ENCODE measurements at regions of chr4 and their contacts with region 1.

Region 1: DNA sequence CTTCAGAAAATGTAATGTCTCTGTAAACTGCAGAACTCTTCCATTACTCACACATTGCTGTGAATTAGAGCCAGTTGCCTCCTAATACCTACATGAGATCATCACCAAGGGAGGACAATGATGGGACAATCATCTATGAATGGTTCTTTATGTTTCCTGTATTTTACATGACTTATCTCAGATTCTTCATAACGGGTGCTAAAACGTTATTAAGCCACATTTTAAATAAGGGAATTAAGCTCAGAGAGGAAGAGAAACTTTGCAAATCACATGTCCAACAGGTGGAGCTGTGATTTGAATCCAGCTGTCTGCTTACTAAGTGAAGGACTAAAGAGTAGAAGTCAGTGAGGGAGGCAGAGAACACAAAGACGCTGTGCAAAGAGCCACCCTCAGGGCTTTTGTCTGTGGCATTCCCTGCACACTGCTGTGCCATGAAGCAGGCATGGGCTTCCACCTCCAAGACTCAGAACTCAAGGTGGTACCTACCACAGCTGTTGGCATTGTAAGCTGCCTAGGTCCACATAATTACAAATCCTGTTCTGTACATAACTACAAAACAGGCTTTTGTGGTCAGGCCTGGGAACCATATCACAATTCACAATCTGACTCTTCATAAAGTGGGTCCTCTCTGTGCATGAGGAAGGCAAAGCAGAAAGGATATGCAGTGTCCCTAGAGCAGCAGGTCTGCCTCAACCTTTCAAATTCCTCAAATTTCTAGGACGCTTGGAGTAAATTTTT is 12.8 kb downstream of the TBC1D9 start:
- DNase-seq: peak; percentile 83
- ATAC-seq: peak; percentile 72
- H3K4me3 ChIP-seq: peak overlapping the region; percentile 7 to 59 (median 31)
- H3K4me3 Mint-ChIP-seq: peak overlapping the region; percentile 82
- H3K27ac ChIP-seq: peak overlapping the region; percentile 89 to 91
- H3K27ac Mint-ChIP-seq: peak overlapping the region; percentile 94
- H3K4me1 ChIP-seq: peaks cover 71 to 76% of the 10 kb centered on the region in 2 donors
- H3K4me1 Mint-ChIP-seq: peaks cover 87% of the 10 kb centered on the region
- H3K27me3 ChIP-seq: no peaks in the 10 kb centered on the region
- H3K27me3 Mint-ChIP-seq: no peaks in the 10 kb centered on the region
- CTCF ChIP-seq: peak; percentile 59

Region 2: DNA sequence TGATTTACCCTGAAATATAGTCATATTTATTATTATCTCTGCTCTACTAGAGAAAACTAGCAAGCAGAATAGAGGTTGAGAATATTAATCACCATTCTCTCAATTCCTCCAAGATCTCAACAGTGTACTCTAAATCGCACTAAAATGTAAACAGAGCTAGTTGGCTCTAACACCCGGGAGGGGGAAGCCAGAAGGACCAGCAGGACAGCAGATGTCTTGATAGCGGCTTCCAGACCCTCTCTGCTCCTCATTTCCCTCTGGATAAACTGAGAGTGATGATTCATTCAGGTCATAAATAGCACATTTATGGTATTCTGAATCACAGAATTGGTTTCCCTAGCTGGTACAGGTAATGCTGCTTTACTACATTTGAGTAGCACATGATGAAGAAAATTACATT is 69.6 kb before region 1 on chr4:
- CTCF ChIA-PET with region 1: interaction called, 4 read pairs
- POLR2A ChIA-PET with region 1: interaction called, 3 read pairs
- intact Hi-C with region 1: loop called (anchors 5 kb)
- DNase-seq: no peak
- ATAC-seq: no peak
- H3K4me3 ChIP-seq: no peak overlapping the region
- H3K4me3 Mint-ChIP-seq: no peak overlapping the region
- H3K27ac ChIP-seq: no peak overlapping the region
- H3K27ac Mint-ChIP-seq: no peak overlapping the region
- H3K4me1 ChIP-seq: peaks cover 12 to 13% of the 10 kb centered on the region in 2 donors
- H3K4me1 Mint-ChIP-seq: peaks cover 18% of the 10 kb centered on the region
- H3K27me3 ChIP-seq: no peaks in the 10 kb centered on the region
- H3K27me3 Mint-ChIP-seq: no peaks in the 10 kb centered on the region
- CTCF ChIP-seq: no peak

Region 3: DNA sequence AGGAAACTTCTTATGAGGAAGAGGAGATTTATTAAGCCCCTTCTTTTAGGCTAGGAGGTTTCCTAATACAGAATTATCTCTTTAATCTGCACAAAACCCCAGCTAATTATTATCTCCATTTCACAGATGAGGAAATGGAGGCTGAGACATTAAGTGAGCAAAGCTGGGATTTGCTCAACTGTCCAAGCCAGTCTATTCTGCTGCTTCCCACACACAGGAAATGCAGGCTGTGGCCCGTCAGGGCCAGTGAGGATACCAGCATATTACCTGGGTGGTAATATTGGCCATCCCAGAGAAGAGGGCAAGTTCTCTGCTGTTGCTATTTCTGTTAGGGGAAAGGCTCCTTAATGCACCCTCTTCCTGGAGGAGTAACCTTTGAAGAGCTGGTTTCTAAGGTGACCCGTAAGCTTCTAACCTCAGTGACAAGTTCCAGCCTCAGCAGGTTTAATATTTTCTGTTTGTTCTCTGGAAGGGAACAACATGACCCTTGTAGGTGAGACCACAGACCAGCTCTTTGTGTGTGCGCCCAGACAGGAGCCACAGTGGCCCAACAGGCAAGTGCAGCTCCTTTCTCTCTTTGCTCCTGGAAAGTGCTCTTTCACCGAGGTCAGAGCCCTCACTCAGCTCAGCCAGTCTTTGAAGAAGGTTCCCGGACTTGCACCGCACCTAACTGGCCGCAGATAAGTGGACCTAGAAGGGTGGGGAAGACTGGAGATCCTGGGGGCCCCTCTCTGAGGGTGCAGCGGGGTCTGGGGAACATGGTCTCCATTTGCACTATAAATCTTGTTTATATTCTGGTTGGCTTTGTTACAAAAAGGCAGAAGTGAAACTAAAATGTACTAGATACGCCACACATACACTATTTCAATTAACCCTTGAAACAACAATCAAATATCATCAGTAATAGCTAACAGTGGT is 22.7 kb before region 1 on chr4:
- CTCF ChIA-PET with region 1: interaction called, 36 read pairs
- POLR2A ChIA-PET with region 1: interaction called, 22 read pairs
- intact Hi-C with region 1: loop called (anchors 2 kb)
- DNase-seq: peak; percentile 75
- ATAC-seq: peak; percentile 63
- H3K4me3 ChIP-seq: peak overlapping the region; percentile 40 to 68 (median 54)
- H3K4me3 Mint-ChIP-seq: peak overlapping the region; percentile 89
- H3K27ac ChIP-seq: peak overlapping the region; percentile 92
- H3K27ac Mint-ChIP-seq: peak overlapping the region; percentile 99
- H3K4me1 ChIP-seq: peaks cover 75 to 76% of the 10 kb centered on the region in 2 donors
- H3K4me1 Mint-ChIP-seq: peaks cover 85% of the 10 kb centered on the region
- H3K27me3 ChIP-seq: no peaks in the 10 kb centered on the region
- H3K27me3 Mint-ChIP-seq: no peaks in the 10 kb centered on the region
- CTCF ChIP-seq: no peak

Region 4: DNA sequence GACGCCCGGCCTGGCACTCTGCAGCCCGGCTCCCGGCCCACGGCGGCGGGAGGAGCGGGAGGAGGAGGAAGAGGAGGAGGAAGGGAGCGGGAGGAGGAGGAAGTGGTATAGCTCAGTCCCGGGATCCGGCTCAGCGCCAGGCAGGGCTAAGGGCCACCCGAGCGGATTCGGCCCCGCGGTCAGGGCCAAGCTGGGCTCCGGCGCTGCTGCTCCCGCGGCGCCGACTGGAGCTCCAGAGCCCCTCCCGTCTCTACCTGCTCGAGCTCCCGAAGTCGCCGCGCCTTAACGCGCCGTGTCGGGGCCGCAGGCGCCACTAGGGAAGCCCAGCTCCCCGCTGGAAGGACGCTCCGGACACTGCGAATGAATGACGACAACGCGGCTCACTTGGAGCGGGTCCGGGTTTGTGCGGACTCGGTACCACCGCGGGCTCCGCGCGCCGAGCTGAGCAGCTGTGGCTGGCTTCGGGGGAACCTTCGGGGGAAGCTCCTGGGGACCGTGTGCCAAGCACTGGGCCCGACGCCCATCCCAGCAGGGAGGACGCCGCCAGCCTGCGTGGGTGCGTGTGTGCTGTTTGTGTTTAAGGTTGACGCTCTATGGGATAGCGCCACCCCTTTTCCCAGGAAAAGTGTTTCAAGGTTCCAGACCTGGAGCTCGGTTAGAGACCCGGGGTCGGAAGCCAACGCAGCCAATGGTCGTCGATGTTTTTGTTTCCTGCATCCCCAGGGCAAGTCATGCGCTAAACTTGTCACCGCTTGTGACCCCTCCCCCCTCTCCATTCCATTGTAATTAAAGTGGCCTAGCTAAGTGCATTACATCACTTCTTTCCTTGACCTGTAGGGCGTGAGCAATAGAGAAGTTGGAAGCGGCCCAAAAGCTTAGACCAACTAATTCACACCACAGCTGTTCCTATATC is 13.2 kb after region 1 on chr4 and contains the start of gene TBC1D9:
- CTCF ChIA-PET with region 1: interaction called, 39 read pairs
- POLR2A ChIA-PET with region 1: interaction called, 52 read pairs
- intact Hi-C with region 1: loop called (anchors 1 kb)
- DNase-seq: peak; percentile 88
- ATAC-seq: peak; percentile 62
- H3K4me3 ChIP-seq: peak within 1 kb of the TSS; percentile 66 to 99 (median 87)
- H3K4me3 Mint-ChIP-seq: peak within 1 kb of the TSS; percentile 97
- H3K27ac ChIP-seq: peak within 1 kb of the TSS; percentile 99
- H3K27ac Mint-ChIP-seq: peak within 1 kb of the TSS; percentile 98
- H3K4me1 ChIP-seq: peaks cover 45 to 56% of the 10 kb centered on the region in 2 donors
- H3K4me1 Mint-ChIP-seq: peaks cover 63% of the 10 kb centered on the region
- H3K27me3 ChIP-seq: no peaks in the 10 kb centered on the region
- H3K27me3 Mint-ChIP-seq: no peaks in the 10 kb centered on the region
- CTCF ChIP-seq: peak; percentile 1
- total RNA-seq, gene TBC1D9: 235 and 252 TPM in 2 replicates

Region 5: GRCh38 chr4:140807491-140808252 is 64.3 kb after region 1 on chr4:
- CTCF ChIA-PET with region 1: interaction called, 10 read pairs
- POLR2A ChIA-PET with region 1: interaction called, 5 read pairs
- intact Hi-C with region 1: loop called (anchors 1 kb)
- DNase-seq: peak; percentile 80
- ATAC-seq: peak; percentile 84
- H3K4me3 ChIP-seq: peak overlapping the region in 2 of 5 experiments; percentile 10 to 50
- H3K4me3 Mint-ChIP-seq: peak overlapping the region; percentile 70
- H3K27ac ChIP-seq: peak overlapping the region; percentile 82 to 83
- H3K27ac Mint-ChIP-seq: peak overlapping the region; percentile 97
- H3K4me1 ChIP-seq: peaks cover 85 to 92% of the 10 kb centered on the region in 2 donors
- H3K4me1 Mint-ChIP-seq: peaks cover 83% of the 10 kb centered on the region
- H3K27me3 ChIP-seq: no peaks in the 10 kb centered on the region
- H3K27me3 Mint-ChIP-seq: no peaks in the 10 kb centered on the region
- CTCF ChIP-seq: no peak

Region 6: DNA sequence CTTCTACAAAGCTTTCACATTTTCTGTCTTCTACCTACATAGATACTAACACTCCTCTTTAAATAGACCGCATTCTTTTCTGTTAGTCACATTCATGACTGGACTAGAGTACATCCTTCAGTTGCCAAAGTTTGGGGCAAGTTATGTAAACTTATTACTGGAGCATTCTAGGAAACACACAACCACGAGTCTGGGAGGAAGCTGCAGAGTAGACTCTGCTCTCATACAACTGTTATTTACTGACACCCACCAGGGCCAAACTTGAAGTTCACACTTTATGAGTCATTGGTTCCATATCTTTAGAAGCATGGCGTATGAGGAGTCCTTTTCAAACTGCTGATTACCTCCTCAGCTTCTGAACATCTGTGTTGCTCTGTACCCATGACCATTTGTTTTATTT is 302.9 kb after region 1 on chr4:
- CTCF ChIA-PET with region 1: no interaction called
- POLR2A ChIA-PET with region 1: no interaction called
- intact Hi-C with region 1: no loop called
- DNase-seq: no peak
- ATAC-seq: no peak
- H3K4me3 ChIP-seq: no peak overlapping the region
- H3K4me3 Mint-ChIP-seq: no peak overlapping the region
- H3K27ac ChIP-seq: no peak overlapping the region
- H3K27ac Mint-ChIP-seq: no peak overlapping the region
- H3K4me1 ChIP-seq: no peaks in the 10 kb centered on the region
- H3K4me1 Mint-ChIP-seq: no peaks in the 10 kb centered on the region
- H3K27me3 ChIP-seq: no peaks in the 10 kb centered on the region
- H3K27me3 Mint-ChIP-seq: peaks cover 4% of the 10 kb centered on the region
- CTCF ChIP-seq: no peak